Esophagus muscularis mucosa (tissue), 4 donors: ENCODE measurements at regions of chr18 and their contacts with region 1.

Region 1: GRCh38 chr18:10519999-10520935 is 5.6 kb upstream of the NAPG start:
- DNase-seq: no peak
- H3K4me3 ChIP-seq: no peak overlapping the region
- H3K27ac ChIP-seq: peak overlapping the region in 1 of 4 donors; percentile 6
- H3K4me1 ChIP-seq: peaks cover 12 to 31% (median 28%) of the 10 kb centered on the region in 4 donors
- H3K27me3 ChIP-seq: no peaks in the 10 kb centered on the region
- CTCF ChIP-seq: peak; percentile 80 to 88 (median 81)
- EP300 ChIP-seq: no peak
- POLR2A ChIP-seq: no peak

Region 2: GRCh38 chr18:9971313-9971920 is 548.9 kb before region 1 on chr18:
- intact Hi-C with region 1: loop called (anchors 2 kb)
- DNase-seq: no peak
- H3K4me3 ChIP-seq: no peak overlapping the region
- H3K27ac ChIP-seq: no peak overlapping the region
- H3K4me1 ChIP-seq: peaks cover 0 to 20% (median 6%) of the 10 kb centered on the region in 4 donors
- H3K27me3 ChIP-seq: no peaks in the 10 kb centered on the region
- CTCF ChIP-seq: peak; percentile 82 to 86 (median 83)
- EP300 ChIP-seq: no peak
- POLR2A ChIP-seq: no peak

Region 3: GRCh38 chr18:10353791-10354190 is 166.5 kb before region 1 on chr18:
- intact Hi-C with region 1: loop called (anchors 5 kb)
- DNase-seq: peak; percentile 37
- H3K4me3 ChIP-seq: no peak overlapping the region
- H3K27ac ChIP-seq: peak overlapping the region; percentile 46 to 72 (median 52)
- H3K4me1 ChIP-seq: peaks cover 20 to 41% (median 29%) of the 10 kb centered on the region in 4 donors
- H3K27me3 ChIP-seq: no peaks in the 10 kb centered on the region
- CTCF ChIP-seq: no peak
- EP300 ChIP-seq: no peak
- POLR2A ChIP-seq: no peak